ENCODE measurements at regions of chr15 and their contacts with region 1.

Region 1: DNA sequence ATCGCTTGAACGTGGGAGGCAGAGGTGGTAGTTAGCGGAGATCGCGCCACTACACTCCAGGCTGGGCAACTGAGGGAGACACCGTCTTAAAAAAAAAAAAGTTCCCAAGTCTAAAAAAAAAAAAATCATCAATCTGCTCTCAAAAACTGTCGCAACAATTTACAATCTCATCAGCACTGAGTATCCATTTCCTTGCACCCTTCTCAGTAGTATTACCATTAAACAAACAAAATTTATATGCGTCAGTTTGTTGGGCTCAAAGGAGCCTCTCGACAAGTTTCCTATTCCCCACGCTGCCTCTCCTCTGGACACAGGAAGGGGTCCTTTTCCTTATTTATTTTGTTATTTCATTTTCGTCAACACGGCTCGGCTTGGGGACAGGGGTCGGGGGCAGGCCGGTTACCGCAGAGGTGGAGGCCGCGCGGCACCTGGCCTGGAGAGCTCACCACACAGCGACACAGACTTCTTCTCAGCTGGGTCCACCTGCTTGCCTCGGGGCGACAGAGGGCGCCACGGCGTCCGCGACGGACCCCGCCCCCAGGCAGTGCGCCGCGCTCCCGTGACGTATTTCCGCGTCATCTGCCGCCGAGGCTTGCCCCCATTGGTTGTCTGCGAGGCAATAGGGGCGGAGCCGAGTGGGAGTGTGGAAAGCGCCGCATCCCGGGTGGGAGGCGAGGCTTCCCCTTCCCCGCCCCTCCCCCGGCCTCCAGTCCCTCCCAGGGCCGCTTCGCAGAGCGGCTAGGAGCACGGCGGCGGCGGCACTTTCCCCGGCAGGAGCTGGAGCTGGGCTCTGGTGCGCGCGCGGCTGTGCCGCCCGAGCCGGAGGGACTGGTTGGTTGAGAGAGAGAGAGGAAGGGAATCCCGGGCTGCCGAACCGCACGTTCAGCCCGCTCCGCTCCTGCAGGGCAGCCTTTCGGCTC is at the start of gene MAP2K1:
- DNase-seq: peak; percentile 100
- H3K4me3 Mint-ChIP-seq: peak within 1 kb of the TSS; percentile 98
- H3K27ac Mint-ChIP-seq: peak within 1 kb of the TSS; percentile 100
- H3K4me1 Mint-ChIP-seq: peaks cover 41% of the 10 kb centered on the region
- H3K27me3 Mint-ChIP-seq: no peaks in the 10 kb centered on the region
- total RNA-seq, gene MAP2K1: 98.9 and 106 TPM in 2 replicates

Region 2: DNA sequence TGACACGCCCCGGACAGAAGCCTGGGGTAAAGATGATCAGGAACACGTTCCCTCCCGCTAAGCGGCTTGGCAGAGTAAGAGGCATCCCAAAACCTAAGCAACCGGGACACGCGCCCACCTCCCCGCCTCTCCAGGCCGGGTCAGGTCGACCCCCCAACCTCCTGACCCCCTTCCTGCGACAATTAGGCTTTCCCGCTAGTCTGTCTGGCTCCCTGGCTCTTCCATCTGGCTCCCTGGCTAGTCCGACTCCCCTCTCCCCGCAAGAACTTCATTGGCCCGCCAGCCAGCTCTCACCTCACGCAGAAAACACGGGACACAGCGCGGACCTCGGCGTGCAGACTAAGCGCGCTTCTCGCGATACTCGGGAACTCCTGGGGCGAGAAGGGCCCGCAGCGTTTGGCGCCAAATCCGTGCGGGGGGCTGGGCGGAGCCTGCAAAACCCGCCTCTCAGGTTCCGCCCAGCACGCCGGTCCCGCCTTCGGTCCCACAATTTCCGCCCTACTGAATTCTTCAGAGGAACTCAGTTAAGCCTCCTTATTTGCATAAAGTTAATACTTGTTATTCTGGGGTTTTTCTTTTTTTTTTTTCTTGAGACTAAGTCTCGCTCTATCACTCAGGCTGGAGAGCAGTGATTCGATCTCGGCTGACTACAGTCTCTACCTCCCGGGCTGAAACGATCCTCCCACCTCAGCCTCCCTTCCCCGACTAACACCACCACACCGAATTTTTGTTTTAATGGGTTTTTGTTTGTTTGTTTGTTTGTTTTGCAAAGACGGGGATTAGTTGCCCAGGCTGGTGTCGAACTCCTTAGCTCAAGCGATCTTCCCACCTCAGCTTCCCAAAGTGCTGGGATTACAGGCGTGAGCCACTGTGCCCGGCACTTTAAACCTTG is 29.9 kb before region 1 on chr15 and contains the start of gene TIPIN:
- intact Hi-C with region 1: loop called (anchors 1 kb)
- DNase-seq: peak; percentile 99
- H3K4me3 Mint-ChIP-seq: peak within 1 kb of the TSS; percentile 93
- H3K27ac Mint-ChIP-seq: peak within 1 kb of the TSS; percentile 96
- H3K4me1 Mint-ChIP-seq: peaks cover 23% of the 10 kb centered on the region
- H3K27me3 Mint-ChIP-seq: no peaks in the 10 kb centered on the region
- total RNA-seq, gene TIPIN: 56.2 and 60.0 TPM in 2 replicates

Region 3: DNA sequence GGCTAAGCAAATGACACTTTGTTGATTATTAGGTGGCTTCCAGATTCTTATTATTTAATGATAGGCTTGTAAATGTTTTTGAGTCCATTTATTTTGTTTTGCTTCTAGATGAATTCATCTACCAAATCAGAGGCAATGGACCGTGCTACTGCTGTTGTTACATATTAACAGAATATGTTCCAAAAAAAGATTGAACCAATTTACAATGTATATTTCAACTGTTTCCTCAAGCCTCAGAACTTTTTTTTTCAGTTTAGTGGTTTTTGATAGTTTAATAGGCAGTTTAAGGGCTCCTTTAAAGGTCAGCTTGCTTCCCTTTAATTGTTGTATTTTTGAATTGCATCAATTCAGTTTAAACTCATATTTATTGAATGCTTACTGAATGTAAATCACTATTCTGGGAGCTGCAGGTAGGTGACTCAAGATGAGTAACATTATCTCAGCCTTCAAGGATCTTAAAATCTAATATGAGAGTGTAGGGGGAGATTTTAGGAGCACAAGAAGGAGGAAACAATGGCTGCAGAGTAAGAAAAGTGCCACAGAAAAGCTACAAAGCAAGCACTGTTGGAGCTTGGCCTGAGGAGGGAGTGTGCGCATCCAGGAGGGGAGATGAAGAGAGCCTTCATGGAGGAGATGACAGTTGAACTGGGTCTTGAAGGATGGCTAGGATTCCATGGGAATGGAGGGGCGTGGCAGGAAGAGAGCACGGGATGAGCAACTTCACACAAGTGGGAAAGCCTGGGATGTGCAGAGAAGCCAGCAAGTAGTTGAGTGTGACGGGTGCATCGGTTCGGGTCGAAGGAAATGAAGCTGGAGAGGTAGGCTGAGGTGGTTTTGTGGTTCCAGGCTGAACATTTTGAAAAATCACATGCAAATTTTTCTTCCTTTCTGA is 14.9 kb after region 1 on chr15:
- intact Hi-C with region 1: loop called (anchors 1 kb)
- DNase-seq: peak; percentile 78
- H3K4me3 Mint-ChIP-seq: peak overlapping the region; percentile 73
- H3K27ac Mint-ChIP-seq: peak overlapping the region; percentile 25
- H3K4me1 Mint-ChIP-seq: peaks cover 68% of the 10 kb centered on the region
- H3K27me3 Mint-ChIP-seq: no peaks in the 10 kb centered on the region

Region 4: GRCh38 chr15:66497502-66498455 is 111.3 kb after region 1 on chr15 and contains the start of gene SNAPC5:
- intact Hi-C with region 1: loop called (anchors 1 kb)
- DNase-seq: peak; percentile 100
- H3K4me3 Mint-ChIP-seq: peak within 1 kb of the TSS; percentile 95
- H3K27ac Mint-ChIP-seq: peak within 1 kb of the TSS; percentile 97
- H3K4me1 Mint-ChIP-seq: peaks cover 47% of the 10 kb centered on the region
- H3K27me3 Mint-ChIP-seq: no peaks in the 10 kb centered on the region
- total RNA-seq, gene SNAPC5: 33.5 and 33.9 TPM in 2 replicates